Right lobe of liver (tissue), 6 donors: ENCODE measurements at regions of chr4 and their contacts with region 1.

Region 1: GRCh38 chr4:158845311-158846041 is 76.7 kb downstream of the FNIP2 start:
- DNase-seq: no peak
- ATAC-seq: peak; percentile 36 to 57 (median 47)
- H3K4me3 ChIP-seq: no peak overlapping the region
- H3K27ac ChIP-seq: peak overlapping the region in 1 of 3 donors; percentile 9
- H3K4me1 ChIP-seq: peaks cover 0 to 17% (median 8%) of the 10 kb centered on the region in 4 donors
- H3K27me3 ChIP-seq: no peaks in the 10 kb centered on the region
- CTCF ChIP-seq: no peak
- POLR2A ChIP-seq: no peak

Region 2: DNA sequence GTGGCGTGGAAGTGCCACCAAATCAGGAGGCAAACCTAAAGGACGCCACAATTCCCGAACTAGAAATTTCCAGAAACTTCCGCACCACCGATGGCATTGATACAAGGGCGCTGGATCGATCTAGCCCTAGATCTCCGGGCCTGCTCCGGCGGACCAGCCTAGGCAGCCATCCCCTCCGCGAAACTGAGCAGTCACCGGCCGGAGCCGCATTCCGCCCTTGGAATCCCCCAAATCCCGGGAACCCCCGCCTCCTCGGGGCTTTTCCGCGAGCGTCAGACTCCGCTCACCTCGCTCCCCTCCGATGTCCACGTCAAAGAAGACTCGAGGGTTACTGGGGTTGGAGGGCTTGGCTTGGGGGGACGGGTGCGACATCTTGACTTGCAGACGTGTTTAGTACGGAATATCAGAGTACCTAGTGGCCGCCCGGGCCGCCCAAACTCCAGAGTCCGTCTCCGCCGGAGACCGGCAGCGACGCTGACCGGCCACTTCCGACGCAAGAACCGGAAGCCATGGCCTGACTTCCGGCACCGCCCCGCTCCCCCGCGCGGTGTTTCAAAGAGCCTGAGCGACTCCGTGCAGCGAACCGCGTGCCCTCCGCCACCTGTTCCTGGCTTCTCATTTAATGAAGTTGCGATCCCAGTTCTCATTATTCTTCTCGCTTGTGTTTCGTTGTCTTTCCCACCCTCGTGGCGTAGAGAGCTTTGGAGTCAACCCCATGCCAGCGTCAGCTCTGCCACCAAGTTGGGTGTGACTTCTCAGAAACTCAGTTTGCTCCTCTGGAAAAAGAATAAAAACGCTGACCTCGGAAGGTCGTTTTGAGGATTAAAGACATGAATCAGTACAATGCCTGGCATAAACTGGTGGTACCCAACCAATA is 122.3 kb before region 1 on chr4 and contains the start of gene PPID:
- intact Hi-C with region 1: loop called in 1 of 2 experiments (anchors 10 kb)
- DNase-seq: peak; percentile 88 to 91 (median 91)
- ATAC-seq: peak; percentile 96 to 99 (median 98)
- H3K4me3 ChIP-seq: peak within 1 kb of the TSS; percentile 76 to 92 (median 76)
- H3K27ac ChIP-seq: peak within 1 kb of the TSS; percentile 96 to 99 (median 97)
- H3K4me1 ChIP-seq: peaks cover 0 to 10% (median 3%) of the 10 kb centered on the region in 4 donors
- H3K27me3 ChIP-seq: no peaks in the 10 kb centered on the region
- CTCF ChIP-seq: no peak
- POLR2A ChIP-seq: peak; percentile 81
- total RNA-seq, gene PPID: 12.6 to 31.4 (median 18.5) TPM

Region 3: GRCh38 chr4:158729716-158730559 is 115.5 kb before region 1 on chr4:
- intact Hi-C with region 1: loop called (anchors 5 to 10 kb)
- DNase-seq: peak in 2 of 3 donors; percentile 45 to 67
- ATAC-seq: peak; percentile 100
- H3K4me3 ChIP-seq: no peak overlapping the region
- H3K27ac ChIP-seq: no peak overlapping the region
- H3K4me1 ChIP-seq: no peaks in the 10 kb centered on the region
- H3K27me3 ChIP-seq: no peaks in the 10 kb centered on the region
- CTCF ChIP-seq: peak; percentile 85 to 95 (median 89)
- POLR2A ChIP-seq: no peak

Region 4: GRCh38 chr4:158768555-158769174 is 76.8 kb before region 1 on chr4 and contains the start of gene FNIP2:
- intact Hi-C with region 1: no loop called
- DNase-seq: peak; percentile 90 to 91 (median 90)
- ATAC-seq: peak; percentile 85 to 96 (median 94)
- H3K4me3 ChIP-seq: peak within 1 kb of the TSS; percentile 55 to 88 (median 76)
- H3K27ac ChIP-seq: peak within 1 kb of the TSS; percentile 81 to 87 (median 87)
- H3K4me1 ChIP-seq: peaks cover 0 to 16% (median 0%) of the 10 kb centered on the region in 4 donors
- H3K27me3 ChIP-seq: no peaks in the 10 kb centered on the region
- CTCF ChIP-seq: peak in 1 of 4 donors; percentile 23
- POLR2A ChIP-seq: peak; percentile 85
- total RNA-seq, gene FNIP2: 34.2 to 67.4 (median 37.8) TPM

Region 5: GRCh38 chr4:158970812-158971211 is 125.3 kb after region 1 on chr4:
- intact Hi-C with region 1: no loop called
- DNase-seq: no peak
- ATAC-seq: no peak
- H3K4me3 ChIP-seq: no peak overlapping the region
- H3K27ac ChIP-seq: no peak overlapping the region
- H3K4me1 ChIP-seq: no peaks in the 10 kb centered on the region
- H3K27me3 ChIP-seq: no peaks in the 10 kb centered on the region
- CTCF ChIP-seq: no peak
- POLR2A ChIP-seq: no peak